ENCODE measurements at regions of chr2 and their contacts with region 1.

Region 1: DNA sequence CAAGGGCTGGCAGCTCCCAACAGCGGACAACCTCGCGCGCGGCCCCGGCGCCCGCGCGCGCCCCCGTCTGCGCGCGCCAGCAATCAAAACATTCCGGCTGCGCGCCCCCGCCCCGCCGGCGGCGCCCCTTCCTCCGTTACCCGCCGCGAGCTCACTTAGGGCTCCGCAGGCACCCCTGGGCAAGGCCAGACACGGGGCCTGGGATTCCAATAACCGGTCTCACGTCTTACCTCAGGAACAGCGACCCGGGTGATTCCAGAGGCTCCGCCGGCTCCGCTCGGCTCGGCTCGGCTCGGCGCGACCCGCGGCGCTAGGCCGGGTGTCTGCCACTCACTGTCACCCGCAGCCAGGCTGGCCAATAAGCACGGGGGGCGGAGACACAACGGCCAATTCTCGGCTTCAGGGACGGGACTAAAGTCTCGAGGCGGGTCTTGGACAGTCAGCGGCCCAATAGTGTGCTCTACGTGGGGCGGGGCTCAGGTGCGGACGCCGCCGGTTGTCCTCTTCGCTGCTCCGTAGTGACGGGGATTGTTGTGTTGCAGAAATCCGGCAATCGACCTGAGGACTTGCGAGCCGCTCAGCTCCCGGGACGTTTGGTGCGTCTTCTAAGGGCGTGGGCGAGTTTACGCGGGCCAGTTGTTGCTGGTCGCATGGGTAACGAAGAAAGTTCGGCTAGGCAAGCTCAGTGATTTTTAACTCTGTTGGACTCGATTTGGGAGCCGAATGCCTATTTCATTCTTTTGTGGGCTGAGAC is at the starts of genes ANKZF1 and ATG9A:
- DNase-seq: peak; percentile 84 to 97 (median 90)
- ATAC-seq: peak; percentile 98
- H3K4me3 ChIP-seq: peak within 1 kb of the TSS; percentile 90
- H3K27ac ChIP-seq: peak within 1 kb of the TSS; percentile 90
- H3K4me1 ChIP-seq: peaks cover 13 to 16% of the 10 kb centered on the region in 2 experiments; a peak in 4 of 5 replicates
- H3K27me3 ChIP-seq: no peaks in the 10 kb centered on the region
- CTCF ChIP-seq: no peak; a peak in 1 of 6 replicates
- EP300 ChIP-seq: peak; percentile 4; the same call in 1 of the 2 replicates
- POLR2A ChIP-seq: peak; percentile 86
- RAD21 ChIP-seq: 0 out of 4 replicates have a peak, but pooled peaks of 1 of the 2 experiments have one; percentile 15
- polyA plus RNA-seq, gene ANKZF1: 3.1 to 3.9 TPM
- polyA plus RNA-seq, gene ATG9A: 0.25 to 0.60 TPM

Region 2: DNA sequence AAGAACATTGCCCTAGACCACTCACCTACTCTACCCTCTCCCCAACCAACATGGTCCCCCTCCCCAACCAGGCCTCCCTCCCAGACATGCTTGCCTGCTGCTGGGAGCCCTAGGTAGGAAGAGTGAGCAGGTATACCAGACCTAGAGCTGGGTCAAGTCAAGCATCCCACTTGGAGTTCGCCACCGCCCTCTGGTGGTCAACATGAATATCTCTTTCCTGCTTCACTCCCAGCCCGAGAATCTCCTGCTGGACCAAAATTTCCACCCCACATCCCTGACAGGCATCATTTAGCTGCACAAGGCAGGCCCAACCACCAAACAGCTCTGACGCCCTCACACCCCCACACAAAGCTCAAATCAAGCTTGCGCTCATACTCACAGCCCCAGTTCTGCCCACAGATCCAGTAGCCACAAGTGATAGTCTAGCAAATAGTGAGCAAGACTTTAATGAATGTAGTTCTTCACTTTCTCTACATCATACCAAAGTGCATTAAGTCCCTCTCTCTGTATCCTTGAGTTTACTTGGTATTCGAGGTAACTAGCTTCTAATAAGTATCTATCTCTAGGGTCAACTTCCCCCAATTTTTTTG is 1342.7 kb before region 1 on chr2:
- CTCF ChIA-PET with region 1: no interaction called
- POLR2A ChIA-PET with region 1: no interaction called
- in situ Hi-C with region 1: no loop called
- intact Hi-C with region 1: no loop called
- DNase-seq: peak; percentile 59 to 72 (median 68)
- ATAC-seq: peak; percentile 90
- H3K4me3 ChIP-seq: no peak overlapping the region
- H3K27ac ChIP-seq: no peak overlapping the region
- H3K4me1 ChIP-seq: peaks cover 3 to 6% of the 10 kb centered on the region in 2 experiments; a peak in 3 of 5 replicates
- H3K27me3 ChIP-seq: no peaks in the 10 kb centered on the region; a peak in 2 of 5 replicates
- CTCF ChIP-seq: peak; percentile 72 to 75 (median 72)
- EP300 ChIP-seq: no peak
- POLR2A ChIP-seq: no peak
- RAD21 ChIP-seq: peak; percentile 43 to 68; a peak in 3 of 4 replicates

Region 3: GRCh38 chr2:219206442-219207253 is 22.8 kb before region 1 on chr2 and contains the start of gene ZFAND2B:
- CTCF ChIA-PET with region 1: no interaction called
- POLR2A ChIA-PET with region 1: interaction called, 3 read pairs
- in situ Hi-C with region 1: no loop called
- intact Hi-C with region 1: loop called (anchors 1 kb)
- DNase-seq: peak; percentile 93 to 95 (median 94)
- ATAC-seq: peak; percentile 97
- H3K4me3 ChIP-seq: peak within 1 kb of the TSS; percentile 61
- H3K27ac ChIP-seq: peak within 1 kb of the TSS; percentile 81
- H3K4me1 ChIP-seq: peaks cover 16 to 17% of the 10 kb centered on the region in 2 experiments; a peak in 4 of 5 replicates
- H3K27me3 ChIP-seq: no peaks in the 10 kb centered on the region
- CTCF ChIP-seq: no peak
- EP300 ChIP-seq: no peak
- POLR2A ChIP-seq: peak; percentile 90
- RAD21 ChIP-seq: no peak
- polyA plus RNA-seq, gene ZFAND2B: 9.9 to 14.6 TPM

Region 4: DNA sequence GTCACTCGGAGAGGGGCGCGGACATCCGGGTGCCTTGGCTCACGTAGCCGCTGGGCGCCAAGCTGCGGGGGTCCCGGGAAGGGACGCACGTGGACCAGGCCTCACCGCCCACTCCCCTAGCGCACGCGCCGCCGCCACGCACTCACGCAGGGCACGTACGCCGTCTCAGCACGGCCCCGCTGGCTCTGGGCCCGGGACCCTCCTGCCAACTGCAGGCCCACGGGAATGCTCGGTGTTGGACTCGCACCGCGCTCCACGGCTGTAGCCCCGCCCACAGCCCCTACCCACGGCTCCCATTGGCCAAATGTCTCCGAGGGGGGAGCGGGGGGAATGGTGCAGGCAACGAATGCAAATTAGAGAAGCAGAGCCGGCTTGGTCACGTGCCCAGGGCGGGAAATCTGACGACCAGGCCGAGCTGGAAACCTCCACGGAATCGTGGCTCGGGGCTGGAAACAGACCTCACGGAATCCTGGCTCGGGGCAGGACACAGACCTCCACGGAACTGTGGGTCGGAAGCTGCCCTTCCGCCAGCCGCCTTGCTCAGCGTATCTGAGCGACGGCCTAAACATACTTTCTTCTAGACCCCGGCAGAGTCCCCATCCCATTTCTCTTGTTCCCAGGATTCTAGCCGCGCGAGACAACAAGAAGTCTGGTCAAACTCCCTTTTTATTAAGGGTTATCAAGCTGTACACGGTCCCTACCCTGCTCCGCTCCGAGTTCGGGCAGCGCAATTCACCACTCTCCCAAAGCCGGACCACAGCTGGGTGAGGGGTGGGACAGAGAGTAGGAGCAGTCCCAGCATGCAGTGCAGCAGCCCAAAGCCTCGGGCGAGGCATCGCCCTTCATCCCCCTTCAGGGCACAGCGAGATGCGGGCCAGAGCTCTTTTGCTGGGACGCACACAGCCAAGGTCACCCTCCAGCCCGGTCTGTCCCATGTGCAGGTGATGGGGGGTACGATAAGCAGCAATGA is 10.5 kb before region 1 on chr2 and contains the start of gene ABCB6:
- CTCF ChIA-PET with region 1: no interaction called
- POLR2A ChIA-PET with region 1: interaction called, 12 read pairs
- in situ Hi-C with region 1: no loop called
- intact Hi-C with region 1: loop called (anchors 1 kb)
- DNase-seq: peak; percentile 82 to 95 (median 90)
- ATAC-seq: peak; percentile 91
- H3K4me3 ChIP-seq: peak within 1 kb of the TSS; percentile 58
- H3K27ac ChIP-seq: peak within 1 kb of the TSS; percentile 89
- H3K4me1 ChIP-seq: peaks cover 13 to 53% of the 10 kb centered on the region in 2 experiments; a peak in 4 of 5 replicates
- H3K27me3 ChIP-seq: no peaks in the 10 kb centered on the region
- CTCF ChIP-seq: no peak
- EP300 ChIP-seq: no peak
- POLR2A ChIP-seq: peak; percentile 84
- RAD21 ChIP-seq: no peak
- polyA plus RNA-seq, gene ABCB6: 3.7 to 8.1 TPM

Region 5: GRCh38 chr2:219245148-219245898 is 15.8 kb after region 1 on chr2 and contains the starts of genes GLB1L and STK16:
- CTCF ChIA-PET with region 1: no interaction called
- POLR2A ChIA-PET with region 1: interaction called, 12 read pairs
- in situ Hi-C with region 1: no loop called
- intact Hi-C with region 1: loop called (anchors 2 kb)
- DNase-seq: peak; percentile 89 to 93 (median 90)
- ATAC-seq: peak; percentile 92
- H3K4me3 ChIP-seq: peak within 1 kb of the TSS; percentile 93
- H3K27ac ChIP-seq: peak within 1 kb of the TSS; percentile 95
- H3K4me1 ChIP-seq: peaks cover 21 to 32% of the 10 kb centered on the region in 2 experiments; a peak in 4 of 5 replicates
- H3K27me3 ChIP-seq: no peaks in the 10 kb centered on the region
- CTCF ChIP-seq: 0 out of 6 replicates have a peak, but pooled peaks of 1 of the 3 experiments have one; percentile 2
- EP300 ChIP-seq: peak; percentile 36; the same call in 1 of the 2 replicates
- POLR2A ChIP-seq: peak; percentile 92
- RAD21 ChIP-seq: no peak
- polyA plus RNA-seq, gene GLB1L: 0.42 to 0.59 TPM
- polyA plus RNA-seq, gene STK16: 5.6 to 12.9 TPM

Region 6: GRCh38 chr2:219294356-219295351 is 65.2 kb after region 1 on chr2:
- CTCF ChIA-PET with region 1: no interaction called
- POLR2A ChIA-PET with region 1: interaction called, 3 read pairs
- in situ Hi-C with region 1: no loop called
- intact Hi-C with region 1: loop called (anchors 5 kb)
- DNase-seq: peak; percentile 89 to 93 (median 92)
- ATAC-seq: peak; percentile 89
- H3K4me3 ChIP-seq: peak overlapping the region; percentile 36
- H3K27ac ChIP-seq: peak overlapping the region; percentile 76
- H3K4me1 ChIP-seq: peaks cover 22 to 57% of the 10 kb centered on the region in 2 experiments; a peak in 4 of 5 replicates
- H3K27me3 ChIP-seq: peaks cover 0 to 4% of the 10 kb centered on the region in 2 experiments; a peak in 2 of 5 replicates
- CTCF ChIP-seq: peak; percentile 93 to 99 (median 98)
- EP300 ChIP-seq: 0 out of 2 replicates have a peak, but pooled peaks have one; percentile 7
- POLR2A ChIP-seq: peak; percentile 72; the same call in 1 of the 2 replicates
- RAD21 ChIP-seq: peak; percentile 81 to 87

Measured in K562 (cell line).